HepG2 (cell line): ENCODE measurements at regions of chr20 and their contacts with region 1.

Region 1: GRCh38 chr20:62861726-62862336 is at the start of gene TCFL5:
- DNase-seq: peak; percentile 88
- ATAC-seq: peak; percentile 93
- H3K4me3 ChIP-seq: peak within 1 kb of the TSS; percentile 61 to 83 (median 77)
- H3K27ac ChIP-seq: peak within 1 kb of the TSS; percentile 20
- H3K4me1 ChIP-seq: peaks cover 44% of the 10 kb centered on the region
- H3K27me3 ChIP-seq: peaks cover 0 to 11% of the 10 kb centered on the region in 2 experiments; a peak in 2 of 5 replicates
- CTCF ChIP-seq: no peak; the same call in 1 of the 2 replicates
- EP300 ChIP-seq: peak in 1 of 2 experiments; percentile 39; a peak in 1 of 4 replicates
- POLR2A ChIP-seq: peak; percentile 66 to 78
- RAD21 ChIP-seq: no peak; the same call in 1 of the 2 replicates
- total RNA-seq, gene TCFL5: 20.0 and 21.1 TPM in 2 replicates

Region 2: GRCh38 chr20:62815066-62815991 is 46.5 kb before region 1 on chr20:
- CTCF ChIA-PET with region 1: no interaction called
- POLR2A ChIA-PET with region 1: interaction called, 15 read pairs
- in situ Hi-C with region 1: no loop called
- intact Hi-C with region 1: loop called (anchors 5 kb)
- DNase-seq: peak; percentile 92
- ATAC-seq: peak; percentile 55
- H3K4me3 ChIP-seq: peak overlapping the region; percentile 51 to 77 (median 59); a peak in 5 of 6 replicates
- H3K27ac ChIP-seq: peak overlapping the region; percentile 6
- H3K4me1 ChIP-seq: peaks cover 49% of the 10 kb centered on the region
- H3K27me3 ChIP-seq: no peaks in the 10 kb centered on the region
- CTCF ChIP-seq: peak; percentile 39
- EP300 ChIP-seq: no peak
- POLR2A ChIP-seq: peak; percentile 50 to 66
- RAD21 ChIP-seq: no peak; the same call in none of the 2 replicates

Region 3: DNA sequence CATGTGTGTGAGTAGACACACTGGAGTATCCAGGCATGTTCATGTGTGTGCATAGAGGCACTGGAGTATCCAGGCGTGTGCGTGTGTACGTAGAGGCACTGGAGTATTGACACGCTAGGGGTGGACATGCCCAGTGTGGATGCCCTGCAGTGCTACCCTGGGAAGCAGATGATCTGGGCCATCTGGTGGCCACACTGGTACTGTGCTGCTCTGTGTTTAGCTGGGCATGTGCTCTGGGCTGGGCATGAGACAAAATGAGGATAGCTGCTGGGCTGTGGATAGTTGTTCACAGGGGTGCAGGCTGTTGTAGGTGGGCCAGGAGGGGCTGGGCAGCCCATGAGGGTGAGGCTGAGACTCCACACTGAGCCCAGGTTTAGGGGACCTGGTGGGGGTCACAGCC is 1269.6 kb after region 1 on chr20:
- CTCF ChIA-PET with region 1: no interaction called
- POLR2A ChIA-PET with region 1: no interaction called
- in situ Hi-C with region 1: no loop called
- intact Hi-C with region 1: no loop called
- DNase-seq: peak; percentile 60
- ATAC-seq: peak; percentile 99
- H3K4me3 ChIP-seq: no peak overlapping the region
- H3K27ac ChIP-seq: no peak overlapping the region
- H3K4me1 ChIP-seq: peaks cover 12% of the 10 kb centered on the region
- H3K27me3 ChIP-seq: peaks cover 1 to 24% of the 10 kb centered on the region in 2 experiments; a peak in 3 of 5 replicates
- CTCF ChIP-seq: peak; percentile 76
- EP300 ChIP-seq: no peak
- POLR2A ChIP-seq: no peak
- RAD21 ChIP-seq: peak; percentile 54